ENCODE measurements at regions of chr11 and their contacts with region 1.

Region 1: DNA sequence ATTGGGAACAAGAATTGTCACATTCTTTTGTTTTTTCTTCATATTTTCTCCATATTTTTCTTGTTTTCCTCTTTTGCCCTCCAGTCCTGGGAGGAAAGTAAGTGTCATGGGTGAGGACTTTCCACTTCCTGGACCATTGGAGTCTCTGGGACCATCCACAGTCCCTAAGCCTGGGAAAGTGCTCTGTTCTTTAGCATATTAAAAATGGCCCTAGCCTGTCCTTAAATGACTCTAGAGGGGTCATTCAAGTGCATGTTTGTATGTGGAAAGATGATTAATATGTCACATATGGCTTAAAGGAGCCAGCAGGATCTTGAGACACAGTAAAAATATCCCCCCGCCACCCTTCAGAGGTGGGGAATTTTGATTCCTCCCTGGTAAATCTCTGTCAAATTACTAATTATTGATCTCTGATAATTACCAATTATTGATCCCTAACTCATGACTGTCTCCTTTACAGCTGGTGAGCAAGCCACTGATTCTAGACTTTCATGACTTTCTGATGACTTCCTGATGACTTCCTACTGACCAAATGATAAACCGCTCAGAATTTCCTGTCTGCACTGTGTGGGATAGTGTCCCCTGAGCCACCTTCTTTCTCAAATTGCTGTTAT is 20.0 kb upstream of the SCGB1D1 start:
- DNase-seq: no peak
- ATAC-seq: no peak

Region 2: DNA sequence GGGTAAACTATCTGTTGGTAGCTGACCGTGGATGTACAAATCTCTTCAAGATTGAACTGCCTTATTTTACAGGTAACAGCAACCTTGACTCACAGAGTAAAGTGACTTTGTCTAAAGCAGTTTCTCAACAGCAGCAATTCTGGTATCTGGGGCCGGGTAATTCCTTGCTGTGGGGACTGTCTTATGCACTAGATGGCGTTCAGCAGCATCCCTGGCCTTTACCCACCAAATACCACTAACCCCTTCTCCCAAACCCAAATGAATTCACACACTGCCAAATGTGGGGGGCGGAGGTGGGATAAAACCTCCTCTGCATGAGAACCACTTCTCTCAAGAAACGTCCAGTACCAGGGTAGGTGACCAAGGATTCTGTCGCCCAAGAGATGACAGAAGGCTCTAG is 48.0 kb before region 1 on chr11:
- intact Hi-C with region 1: no loop called
- DNase-seq: no peak
- ATAC-seq: no peak

Region 3: DNA sequence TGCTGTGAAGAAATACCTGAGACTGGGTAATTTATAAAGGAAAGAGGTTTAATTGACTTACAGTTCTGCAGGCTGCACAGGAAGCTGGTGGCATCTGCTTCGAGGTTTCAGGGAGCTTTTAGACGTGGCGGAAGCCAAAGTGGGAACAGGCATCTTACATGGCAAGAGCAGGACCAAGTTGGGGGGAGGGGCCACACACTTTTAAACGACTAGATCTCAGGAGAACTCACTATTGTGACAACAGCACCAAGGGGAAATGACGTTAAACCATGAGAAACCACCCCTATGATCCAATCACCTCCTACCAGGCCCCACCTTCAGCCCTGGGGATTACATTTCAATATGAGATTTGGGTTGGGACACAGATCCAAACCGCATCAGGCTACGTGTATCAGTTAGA is 139.9 kb after region 1 on chr11:
- intact Hi-C with region 1: loop called in 1 of 2 experiments (anchors 5 kb)
- DNase-seq: no peak
- ATAC-seq: no peak